ENCODE measurements at regions of chr20 and their contacts with region 1.

Region 1: GRCh38 chr20:609371-609964 is 641 bp downstream of the TCF15 start:
- DNase-seq: no peak
- CTCF ChIP-seq: no peak

Region 2: GRCh38 chr20:588932-589672 is 20.4 kb before region 1 on chr20:
- CTCF ChIA-PET with region 1: interaction called, 4 read pairs
- POLR2A ChIA-PET with region 1: interaction called, 11 read pairs
- DNase-seq: peak; percentile 73
- CTCF ChIP-seq: peak; percentile 30

Region 3: GRCh38 chr20:1199212-1199873 is 589.9 kb after region 1 on chr20:
- CTCF ChIA-PET with region 1: no interaction called
- POLR2A ChIA-PET with region 1: no interaction called
- DNase-seq: no peak
- CTCF ChIP-seq: no peak